Psoas muscle (tissue), 8 donors: ENCODE measurements at regions of chr6 and their contacts with region 1.

Region 1: DNA sequence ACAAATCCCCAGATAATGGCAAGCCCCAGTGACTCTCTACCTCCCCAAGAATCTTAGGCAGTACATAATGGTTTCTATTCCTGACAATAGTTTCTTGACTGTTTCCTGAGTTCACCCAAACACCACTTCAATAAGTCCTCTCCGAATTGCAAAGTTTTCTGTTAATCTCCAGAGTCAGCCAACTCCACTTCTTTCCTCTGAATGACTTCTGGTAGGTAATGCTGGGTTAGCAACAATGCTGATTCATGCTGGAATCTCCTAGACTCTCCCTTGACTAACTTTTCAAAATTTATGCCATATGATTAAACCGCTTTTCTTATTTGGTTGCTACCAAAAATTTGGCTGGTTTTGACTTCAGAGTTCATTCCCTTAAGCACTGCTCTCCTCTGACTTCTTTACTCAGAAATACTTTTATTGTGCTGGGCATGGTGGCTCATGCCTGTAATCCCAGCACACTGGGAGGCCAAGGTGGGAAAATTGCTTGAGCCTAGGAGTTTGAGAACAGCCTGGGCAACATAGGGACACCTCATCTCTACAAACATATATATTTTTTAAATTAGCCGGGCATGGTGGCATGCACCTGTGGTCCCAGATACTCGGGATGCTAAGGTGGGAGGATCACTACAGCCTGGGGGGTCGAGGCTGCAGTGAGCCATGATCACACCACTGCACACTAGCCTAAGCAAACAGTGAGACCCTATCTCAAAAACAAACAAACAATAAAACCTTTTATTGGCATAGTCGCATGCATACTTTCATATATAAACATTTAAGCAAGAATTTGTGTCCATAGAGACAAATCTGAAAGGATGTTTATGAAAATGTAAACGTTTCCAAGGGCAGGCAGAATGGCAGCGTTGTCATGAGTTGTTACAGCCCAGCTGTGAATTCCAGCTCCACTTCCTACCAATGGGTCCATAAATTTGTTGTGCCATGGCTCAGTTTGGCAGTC is 249.3 kb upstream of the PLN start:
- DNase-seq: no peak
- ATAC-seq: no peak
- H3K4me3 ChIP-seq: no peak overlapping the region
- H3K27ac ChIP-seq: no peak overlapping the region
- H3K4me1 ChIP-seq: peaks cover 23% of the 10 kb centered on the region
- H3K27me3 ChIP-seq: no peaks in the 10 kb centered on the region
- CTCF ChIP-seq: no peak

Region 2: DNA sequence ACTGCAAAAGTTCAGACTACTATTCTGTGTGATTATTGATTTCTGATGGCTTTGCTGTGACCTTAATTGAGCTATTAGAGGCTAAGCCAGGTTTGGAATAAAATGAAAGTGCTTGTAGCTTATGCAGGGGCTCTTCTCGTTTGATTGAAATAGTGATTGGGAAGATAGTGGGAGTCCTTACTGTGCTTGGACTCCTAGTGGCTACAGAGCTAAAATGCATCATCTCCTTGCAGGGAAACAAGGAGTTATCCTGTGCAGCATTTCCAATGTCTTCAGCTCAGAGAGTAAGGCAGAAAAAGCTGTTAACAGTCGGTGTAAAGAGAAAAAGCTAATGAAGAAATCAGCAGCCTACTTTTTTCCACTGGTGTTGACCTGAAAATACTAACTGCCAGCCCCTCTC is 218.2 kb before region 1 on chr6:
- intact Hi-C with region 1: no loop called
- DNase-seq: no peak
- ATAC-seq: no peak
- H3K4me3 ChIP-seq: no peak overlapping the region
- H3K27ac ChIP-seq: no peak overlapping the region
- H3K4me1 ChIP-seq: no peaks in the 10 kb centered on the region
- H3K27me3 ChIP-seq: no peaks in the 10 kb centered on the region
- CTCF ChIP-seq: no peak

Region 3: DNA sequence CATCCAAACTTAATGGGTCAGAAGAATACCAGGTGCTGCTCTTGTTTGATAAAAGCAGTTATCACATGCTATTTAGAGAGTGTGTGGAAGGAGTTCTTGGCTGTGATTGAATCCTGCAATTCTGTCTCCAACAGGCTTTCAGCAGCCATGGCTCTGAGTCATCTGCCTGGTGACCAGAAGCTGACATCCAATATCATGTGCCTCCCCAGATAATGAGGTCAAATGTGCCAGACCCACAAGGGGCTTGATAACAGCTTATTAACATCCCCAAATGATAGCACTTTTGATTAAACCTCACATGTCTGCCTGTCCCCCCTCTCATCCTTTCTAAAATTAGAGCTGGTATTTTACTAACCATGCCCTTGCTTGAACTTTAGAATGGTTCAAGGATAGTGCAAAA is 73.7 kb after region 1 on chr6:
- intact Hi-C with region 1: loop called in 1 of 2 experiments (anchors 5 kb)
- DNase-seq: peak; percentile 19 to 77
- ATAC-seq: peak; percentile 96 to 99 (median 98)
- H3K4me3 ChIP-seq: no peak overlapping the region
- H3K27ac ChIP-seq: peak overlapping the region; percentile 89
- H3K4me1 ChIP-seq: peaks cover 26% of the 10 kb centered on the region
- H3K27me3 ChIP-seq: no peaks in the 10 kb centered on the region
- CTCF ChIP-seq: no peak